HEK293 (cell line): ENCODE measurements at regions of chr22 and their contacts with region 1.

Region 1: GRCh38 chr22:43014869-43015676 is at the start of gene PACSIN2:
- H3K4me3 ChIP-seq: peak within 1 kb of the TSS; percentile 90
- H3K27ac ChIP-seq: peak within 1 kb of the TSS; percentile 72
- H3K4me1 ChIP-seq: peaks cover 8% of the 10 kb centered on the region
- CTCF ChIP-seq: no peak

Region 2: DNA sequence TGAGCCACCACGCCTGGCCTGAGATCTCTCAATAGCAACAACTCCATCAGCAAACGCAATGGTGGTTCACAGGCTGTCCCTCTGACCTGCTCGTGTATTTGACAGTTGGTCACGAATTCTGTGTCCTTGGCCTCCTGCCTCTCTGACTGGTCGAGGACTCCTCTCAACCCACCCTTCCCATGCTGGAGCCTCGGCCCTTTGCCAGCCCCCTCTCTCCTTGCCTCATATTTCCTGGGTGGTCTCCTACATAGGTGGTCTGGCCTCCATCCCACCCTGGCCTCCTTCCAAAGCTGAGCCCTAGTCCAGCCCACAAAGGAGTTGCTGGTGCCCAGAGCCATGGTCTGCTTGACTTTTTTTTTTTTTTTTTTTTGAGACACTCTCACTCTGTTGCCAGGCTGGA is 283.0 kb before region 1 on chr22:
- CTCF ChIA-PET with region 1: no interaction called
- POLR2A ChIA-PET with region 1: no interaction called
- H3K4me3 ChIP-seq: no peak overlapping the region
- H3K27ac ChIP-seq: no peak overlapping the region
- H3K4me1 ChIP-seq: no peaks in the 10 kb centered on the region
- CTCF ChIP-seq: no peak

Region 3: DNA sequence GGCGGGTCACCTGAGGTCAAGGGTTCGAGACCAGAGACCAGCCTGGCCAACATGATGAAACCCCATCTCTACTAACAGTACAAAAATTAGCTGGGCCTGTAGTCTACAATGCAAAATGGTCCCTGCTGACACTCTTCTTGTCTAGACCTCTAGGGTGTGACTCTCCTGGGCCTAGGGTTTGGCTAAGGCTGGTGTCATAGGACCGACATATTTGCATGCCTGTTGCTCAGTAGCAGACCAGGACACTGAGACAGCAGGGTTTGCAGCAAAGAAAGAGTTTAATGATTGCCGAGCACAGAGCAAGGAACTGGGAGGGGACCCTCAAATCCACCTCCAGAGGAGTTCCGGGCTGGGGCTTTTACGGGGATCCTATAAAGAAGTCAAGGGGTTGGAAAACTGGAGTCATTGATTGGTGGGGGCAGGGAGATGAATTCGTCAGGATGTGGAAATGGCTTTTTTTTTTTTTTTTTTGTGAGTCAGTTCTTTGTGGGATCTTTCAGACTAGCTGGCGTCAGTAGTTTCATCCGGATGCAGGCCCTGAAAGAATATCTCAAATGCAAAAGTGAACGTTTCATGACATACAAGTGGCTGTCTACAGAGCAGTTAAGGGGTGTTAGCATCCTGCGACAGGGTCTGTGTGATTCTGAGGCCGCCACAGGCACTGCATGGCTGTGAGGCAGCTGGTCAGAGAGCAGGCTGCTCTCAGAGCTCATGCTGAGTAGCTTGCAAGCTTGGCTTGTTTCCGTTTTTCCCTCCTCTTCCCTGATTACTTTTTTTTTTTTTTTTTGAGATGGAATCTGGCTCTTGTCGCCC is 267.2 kb before region 1 on chr22:
- CTCF ChIA-PET with region 1: no interaction called
- POLR2A ChIA-PET with region 1: no interaction called
- H3K4me3 ChIP-seq: no peak overlapping the region
- H3K27ac ChIP-seq: no peak overlapping the region
- H3K4me1 ChIP-seq: no peaks in the 10 kb centered on the region
- CTCF ChIP-seq: no peak

Region 4: DNA sequence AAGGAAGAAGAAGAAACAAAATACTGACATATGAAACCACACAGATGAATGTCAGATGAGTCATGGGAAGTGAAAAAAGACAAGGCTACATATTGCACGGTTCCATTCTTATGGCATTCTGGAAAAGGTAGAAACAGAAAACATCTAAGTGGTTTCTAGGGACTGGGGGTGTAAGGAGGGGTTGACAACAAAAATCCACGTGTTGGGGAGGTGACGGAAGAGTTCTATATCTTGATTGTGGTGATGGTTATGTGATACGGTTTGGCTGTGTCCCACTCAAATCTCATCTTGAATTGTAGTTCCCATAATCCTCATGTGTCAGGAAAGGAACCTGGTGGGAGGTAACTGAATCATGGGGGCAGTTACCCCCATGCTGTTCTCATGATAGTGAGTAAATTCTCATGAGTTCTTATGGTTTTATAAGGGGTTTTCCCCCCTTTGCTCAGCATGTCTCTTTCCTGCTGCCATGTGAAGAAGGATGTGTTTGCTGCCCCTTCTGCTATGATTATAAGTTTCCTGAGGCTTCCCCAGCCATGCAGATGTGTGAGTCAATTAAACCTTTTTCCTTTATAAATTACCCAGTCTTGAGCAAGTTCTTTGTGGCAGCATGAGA is 151.6 kb before region 1 on chr22:
- CTCF ChIA-PET with region 1: interaction called, 10 read pairs
- POLR2A ChIA-PET with region 1: interaction called, 9 read pairs
- H3K4me3 ChIP-seq: no peak overlapping the region
- H3K27ac ChIP-seq: no peak overlapping the region
- H3K4me1 ChIP-seq: no peaks in the 10 kb centered on the region
- CTCF ChIP-seq: no peak

Region 5: GRCh38 chr22:42947211-42947990 is 67.7 kb before region 1 on chr22:
- CTCF ChIA-PET with region 1: interaction called, 4 read pairs
- POLR2A ChIA-PET with region 1: interaction called, 18 read pairs
- H3K4me3 ChIP-seq: no peak overlapping the region
- H3K27ac ChIP-seq: peak overlapping the region; percentile 19; the same call in 1 of the 2 replicates
- H3K4me1 ChIP-seq: peaks cover 35% of the 10 kb centered on the region
- CTCF ChIP-seq: no peak

Region 6: DNA sequence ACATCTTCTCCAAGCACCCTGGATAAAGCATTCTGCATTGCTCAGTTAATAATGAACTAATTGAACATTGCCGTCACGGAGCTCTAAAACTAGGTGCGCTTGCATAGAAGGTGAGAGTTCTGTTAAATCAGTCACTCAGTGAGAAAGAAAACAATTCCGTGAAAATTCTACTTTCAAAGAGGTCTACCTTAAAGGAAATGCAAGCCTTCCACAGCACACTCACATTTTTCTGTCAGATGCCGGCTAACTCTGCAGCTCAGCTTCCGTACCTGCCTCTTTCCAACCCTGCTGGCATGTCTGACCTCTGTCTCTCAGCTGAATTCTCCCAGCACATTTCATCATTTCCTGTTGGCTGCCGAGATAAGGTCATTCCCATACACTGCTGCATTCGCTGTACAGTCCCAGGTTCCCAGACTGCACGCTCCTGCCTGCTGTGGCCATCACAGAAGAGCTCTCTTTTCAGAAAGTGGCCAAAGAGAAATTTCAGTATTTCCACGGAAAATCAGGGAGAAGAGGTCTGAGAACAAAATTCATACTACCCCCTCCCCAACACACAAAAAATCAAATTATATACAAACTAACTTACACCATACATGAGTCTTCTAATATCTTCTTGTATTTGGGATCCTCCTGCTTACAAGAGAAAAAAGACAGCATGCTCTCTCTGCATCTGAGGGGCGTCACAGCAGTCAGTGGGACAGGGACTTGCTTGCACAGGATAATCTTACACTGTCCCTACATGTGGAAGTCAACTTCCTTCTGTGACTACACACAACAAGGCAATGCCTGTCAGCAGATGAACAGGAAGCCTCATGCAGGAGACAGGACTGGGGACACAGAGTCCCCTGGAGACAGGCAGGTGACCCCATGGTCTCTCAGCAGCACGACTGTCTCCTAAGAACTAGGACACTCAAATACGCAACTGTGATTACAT is 55.2 kb before region 1 on chr22:
- CTCF ChIA-PET with region 1: no interaction called
- POLR2A ChIA-PET with region 1: interaction called, 22 read pairs
- H3K4me3 ChIP-seq: no peak overlapping the region
- H3K27ac ChIP-seq: peak overlapping the region; percentile 35; the same call in 1 of the 2 replicates
- H3K4me1 ChIP-seq: peaks cover 41% of the 10 kb centered on the region
- CTCF ChIP-seq: no peak

Region 7: GRCh38 chr22:42964994-42965699 is 49.9 kb before region 1 on chr22:
- CTCF ChIA-PET with region 1: no interaction called
- POLR2A ChIA-PET with region 1: interaction called, 22 read pairs
- H3K4me3 ChIP-seq: no peak overlapping the region
- H3K27ac ChIP-seq: no peak overlapping the region; the same call in 1 of the 2 replicates
- H3K4me1 ChIP-seq: peaks cover 28% of the 10 kb centered on the region
- CTCF ChIP-seq: no peak

Region 8: GRCh38 chr22:42976217-42976933 is 38.7 kb before region 1 on chr22:
- CTCF ChIA-PET with region 1: no interaction called
- POLR2A ChIA-PET with region 1: interaction called, 11 read pairs
- H3K4me3 ChIP-seq: no peak overlapping the region
- H3K27ac ChIP-seq: no peak overlapping the region
- H3K4me1 ChIP-seq: 0 out of 2 replicates have a peak, but pooled peaks cover 6% of the 10 kb centered on the region
- CTCF ChIP-seq: no peak

Region 9: GRCh38 chr22:42990139-42990767 is 24.8 kb before region 1 on chr22:
- CTCF ChIA-PET with region 1: interaction called, 5 read pairs
- POLR2A ChIA-PET with region 1: interaction called, 18 read pairs
- H3K4me3 ChIP-seq: no peak overlapping the region
- H3K27ac ChIP-seq: no peak overlapping the region
- H3K4me1 ChIP-seq: peaks cover 16% of the 10 kb centered on the region; the same call in 1 of the 2 replicates
- CTCF ChIP-seq: no peak; the same call in 1 of the 2 replicates

Region 10: DNA sequence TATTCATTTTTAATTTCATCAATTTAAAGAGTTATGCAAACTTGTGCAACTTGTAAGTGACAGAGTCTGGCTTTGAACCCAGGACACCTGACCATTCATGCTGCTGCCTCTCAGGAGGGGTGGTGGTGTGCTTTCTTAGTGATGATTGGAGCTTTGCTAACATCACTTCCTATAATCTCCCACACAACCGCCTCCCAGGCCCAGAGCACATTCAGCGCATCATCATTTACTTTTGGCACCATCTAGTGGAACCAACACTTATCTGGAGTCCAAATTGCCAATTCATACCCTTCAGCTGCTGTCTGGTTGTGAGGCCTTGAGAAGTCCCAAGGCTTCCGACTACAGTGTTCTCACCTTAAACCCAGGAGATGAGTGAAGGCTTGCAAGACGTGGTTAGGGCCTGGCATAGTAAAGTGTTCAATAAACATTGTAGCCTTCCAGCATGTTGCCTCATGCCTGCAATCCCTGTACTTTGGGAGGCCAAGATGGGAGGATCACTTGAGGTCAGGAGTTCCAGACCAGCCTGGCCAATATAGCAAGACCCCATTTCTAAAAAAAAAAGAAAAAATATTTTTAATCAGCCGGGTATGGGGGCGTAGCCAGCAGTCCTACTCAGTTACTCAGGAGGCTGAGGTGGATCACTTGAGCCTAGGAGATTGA is 75.2 kb after region 1 on chr22:
- CTCF ChIA-PET with region 1: no interaction called
- POLR2A ChIA-PET with region 1: no interaction called
- H3K4me3 ChIP-seq: no peak overlapping the region
- H3K27ac ChIP-seq: no peak overlapping the region
- H3K4me1 ChIP-seq: no peaks in the 10 kb centered on the region
- CTCF ChIP-seq: peak; percentile 74